Activated CD4-positive, alpha-beta T cell treated with anti-CD3 and anti-CD28 coated beads, Interleukin-2, amount 10 ng/mL, durations not matched to agents 7 days and 5 days (primary cell): ENCODE measurements at regions of chr16 and their contacts with region 1.

Region 1: GRCh38 chr16:11139326-11140097 is 116.5 kb downstream of the SOCS1 start:
- DNase-seq: no peak
- H3K4me3 Mint-ChIP-seq: peak overlapping the region; percentile 51
- H3K27ac Mint-ChIP-seq: peak overlapping the region; percentile 82
- H3K4me1 Mint-ChIP-seq: peaks cover 80% of the 10 kb centered on the region
- H3K27me3 Mint-ChIP-seq: no peaks in the 10 kb centered on the region

Region 2: DNA sequence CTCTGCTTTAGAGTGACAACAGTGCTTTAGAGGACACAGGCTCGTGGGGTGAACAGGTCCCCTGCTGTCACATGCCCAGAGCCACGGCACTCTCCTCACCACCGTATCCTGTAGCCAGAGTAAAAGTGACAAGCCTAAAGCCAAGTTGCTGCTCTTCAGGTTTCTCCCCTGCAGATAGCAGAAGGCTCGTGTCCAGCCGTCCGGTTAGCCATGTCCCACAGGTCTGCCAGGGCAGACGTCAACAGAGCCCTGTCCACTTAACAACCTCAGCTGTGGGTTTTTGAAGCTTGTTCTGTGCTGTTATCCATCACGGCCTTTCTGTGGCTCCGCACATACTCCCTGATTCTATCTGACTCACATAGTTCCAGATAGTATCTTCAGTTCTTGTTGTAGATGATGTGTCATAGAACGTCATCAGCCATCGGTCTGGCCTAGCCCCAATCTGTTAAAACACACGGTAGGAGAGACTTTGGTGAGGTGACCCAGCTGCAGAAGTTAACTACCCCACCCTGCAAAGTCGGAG is 15.8 kb after region 1 on chr16:
- CTCF ChIA-PET with region 1: interaction called, 54 read pairs
- POLR2A ChIA-PET with region 1: no interaction called
- DNase-seq: no peak
- H3K4me3 Mint-ChIP-seq: no peak overlapping the region
- H3K27ac Mint-ChIP-seq: peak overlapping the region; percentile 22
- H3K4me1 Mint-ChIP-seq: peaks cover 68% of the 10 kb centered on the region
- H3K27me3 Mint-ChIP-seq: no peaks in the 10 kb centered on the region

Region 3: DNA sequence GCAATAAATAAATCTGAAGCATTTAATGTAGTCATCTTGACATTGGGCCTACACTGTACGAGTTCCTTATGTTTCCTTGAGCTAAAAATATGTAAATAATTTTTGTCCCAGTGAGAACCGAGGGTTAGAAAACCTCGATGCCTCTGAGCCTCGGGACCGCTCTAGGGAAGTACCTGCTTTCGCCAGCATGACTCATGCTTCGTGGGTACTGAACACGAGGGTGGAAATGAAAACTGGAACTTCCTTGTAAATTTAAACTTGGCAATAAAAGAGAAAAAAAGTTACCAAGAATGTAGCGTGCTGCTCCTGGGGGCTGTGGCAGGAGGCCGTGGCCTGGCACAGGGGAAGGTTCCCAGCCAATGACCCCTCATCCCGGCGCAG is 42.4 kb after region 1 on chr16:
- CTCF ChIA-PET with region 1: interaction called, 3 read pairs
- POLR2A ChIA-PET with region 1: interaction called, 13 read pairs
- DNase-seq: no peak
- H3K4me3 Mint-ChIP-seq: no peak overlapping the region
- H3K27ac Mint-ChIP-seq: peak overlapping the region; percentile 57
- H3K4me1 Mint-ChIP-seq: peaks cover 56% of the 10 kb centered on the region
- H3K27me3 Mint-ChIP-seq: no peaks in the 10 kb centered on the region

Region 4: DNA sequence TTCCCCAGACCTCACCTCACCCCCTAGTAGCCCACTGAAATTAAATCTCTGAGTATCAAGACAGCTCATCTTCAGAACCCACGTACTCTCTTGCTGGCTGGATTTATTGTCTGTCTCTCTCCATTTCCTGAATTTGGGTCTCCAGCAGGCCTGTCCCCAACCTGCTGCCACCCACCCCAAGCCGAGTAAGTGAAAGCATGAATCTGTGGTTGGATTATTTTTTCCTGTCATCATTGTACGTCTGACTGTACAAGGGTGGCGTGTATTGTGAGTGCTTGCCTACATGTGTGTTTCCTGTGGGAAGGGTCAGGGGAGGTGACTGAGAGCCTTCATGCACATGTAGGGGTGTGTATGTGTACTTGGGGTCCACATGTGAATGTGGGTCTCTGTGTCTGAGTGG is 124.2 kb after region 1 on chr16:
- CTCF ChIA-PET with region 1: no interaction called
- POLR2A ChIA-PET with region 1: no interaction called
- DNase-seq: peak; percentile 72
- H3K4me3 Mint-ChIP-seq: peak overlapping the region; percentile 47
- H3K27ac Mint-ChIP-seq: peak overlapping the region; percentile 91
- H3K4me1 Mint-ChIP-seq: peaks cover 56% of the 10 kb centered on the region
- H3K27me3 Mint-ChIP-seq: no peaks in the 10 kb centered on the region